IMR-90 (cell line): ENCODE measurements at regions of chr12 and their contacts with region 1.

Region 1: GRCh38 chr12:26723379-26724308 is 109.3 kb downstream of the ITPR2 start:
- DNase-seq: peak; percentile 78
- ATAC-seq: peak; percentile 91
- H3K4me3 ChIP-seq: peak overlapping the region; percentile 17; the same call in 1 of the 2 replicates
- H3K27ac ChIP-seq: peak overlapping the region; percentile 12; the same call in 1 of the 2 replicates
- H3K4me1 ChIP-seq: peaks cover 4% of the 10 kb centered on the region
- H3K27me3 ChIP-seq: no peaks in the 10 kb centered on the region
- CTCF ChIP-seq: no peak
- POLR2A ChIP-seq: no peak
- RAD21 ChIP-seq: no peak

Region 2: GRCh38 chr12:26783131-26783526 is 59.5 kb after region 1 on chr12:
- CTCF ChIA-PET with region 1: interaction called, 3 read pairs
- POLR2A ChIA-PET with region 1: no interaction called
- dilution Hi-C with region 1: no loop called
- in situ Hi-C with region 1: no loop called
- intact Hi-C with region 1: loop called (anchors 5 kb)
- DNase-seq: no peak
- ATAC-seq: no peak
- H3K4me3 ChIP-seq: no peak overlapping the region
- H3K27ac ChIP-seq: no peak overlapping the region
- H3K4me1 ChIP-seq: peaks cover 9% of the 10 kb centered on the region
- H3K27me3 ChIP-seq: no peaks in the 10 kb centered on the region
- CTCF ChIP-seq: no peak
- POLR2A ChIP-seq: no peak
- RAD21 ChIP-seq: no peak

Region 3: GRCh38 chr12:26832822-26833742 is 109.4 kb after region 1 on chr12 and contains the start of gene ITPR2:
- CTCF ChIA-PET with region 1: no interaction called
- POLR2A ChIA-PET with region 1: no interaction called
- dilution Hi-C with region 1: no loop called
- in situ Hi-C with region 1: no loop called
- intact Hi-C with region 1: loop called (anchors 2 kb)
- DNase-seq: peak; percentile 78
- ATAC-seq: peak; percentile 97
- H3K4me3 ChIP-seq: peak within 1 kb of the TSS; percentile 66
- H3K27ac ChIP-seq: peak within 1 kb of the TSS; percentile 93
- H3K4me1 ChIP-seq: peaks cover 5% of the 10 kb centered on the region; the same call in 1 of the 2 replicates
- H3K27me3 ChIP-seq: no peaks in the 10 kb centered on the region
- CTCF ChIP-seq: peak; percentile 46
- POLR2A ChIP-seq: peak; percentile 62; the same call in 1 of the 2 replicates
- RAD21 ChIP-seq: no peak
- total RNA-seq, gene ITPR2: 9.0 and 9.2 TPM in 2 replicates